AG04450 (cell line): ENCODE measurements at regions of chr1 and their contacts with region 1.

Region 1: GRCh38 chr1:111334169-111334568 is 43.5 kb downstream of the CHIA start:
- DNase-seq: peak; percentile 11
- H3K4me3 ChIP-seq: no peak overlapping the region
- H3K27ac ChIP-seq: no peak overlapping the region
- H3K27me3 ChIP-seq: peaks cover 4% of the 10 kb centered on the region
- CTCF ChIP-seq: peak; percentile 68

Region 2: DNA sequence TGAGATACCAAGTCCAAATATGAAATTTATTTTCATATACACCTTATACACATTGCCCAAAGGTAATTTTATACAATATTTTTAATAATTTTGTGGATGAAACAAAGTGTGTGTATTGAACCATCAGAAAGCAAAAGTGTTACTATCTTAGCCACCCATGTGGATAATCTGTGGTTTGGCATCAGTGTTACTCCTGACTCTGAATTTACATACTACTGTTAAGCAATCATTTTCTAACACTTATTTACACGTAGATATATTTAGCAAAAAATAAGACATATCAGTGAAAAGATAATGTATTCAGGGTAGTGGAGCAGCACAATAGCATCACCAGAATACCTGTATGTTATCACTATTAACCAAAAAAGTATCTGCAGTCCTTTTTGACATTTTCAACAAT is 157.5 kb before region 1 on chr1:
- CTCF ChIA-PET with region 1: no interaction called
- POLR2A ChIA-PET with region 1: no interaction called
- DNase-seq: no peak
- H3K4me3 ChIP-seq: no peak overlapping the region
- H3K27ac ChIP-seq: no peak overlapping the region
- H3K27me3 ChIP-seq: no peaks in the 10 kb centered on the region
- CTCF ChIP-seq: no peak

Region 3: GRCh38 chr1:111222308-111223125 is 111.7 kb before region 1 on chr1:
- CTCF ChIA-PET with region 1: interaction called, 30 read pairs
- POLR2A ChIA-PET with region 1: no interaction called
- DNase-seq: no peak
- H3K4me3 ChIP-seq: no peak overlapping the region
- H3K27ac ChIP-seq: no peak overlapping the region
- H3K27me3 ChIP-seq: no peaks in the 10 kb centered on the region
- CTCF ChIP-seq: peak; percentile 97